ENCODE measurements at regions of chr15 and their contacts with region 1.

Region 1: GRCh38 chr15:31435261-31435911 is 108.8 kb downstream of the KLF13 start:
- DNase-seq: peak; percentile 86
- H3K4me3 Mint-ChIP-seq: peak overlapping the region; percentile 58
- H3K27ac Mint-ChIP-seq: peak overlapping the region; percentile 93
- H3K4me1 Mint-ChIP-seq: peaks cover 77% of the 10 kb centered on the region
- H3K27me3 Mint-ChIP-seq: no peaks in the 10 kb centered on the region

Region 2: DNA sequence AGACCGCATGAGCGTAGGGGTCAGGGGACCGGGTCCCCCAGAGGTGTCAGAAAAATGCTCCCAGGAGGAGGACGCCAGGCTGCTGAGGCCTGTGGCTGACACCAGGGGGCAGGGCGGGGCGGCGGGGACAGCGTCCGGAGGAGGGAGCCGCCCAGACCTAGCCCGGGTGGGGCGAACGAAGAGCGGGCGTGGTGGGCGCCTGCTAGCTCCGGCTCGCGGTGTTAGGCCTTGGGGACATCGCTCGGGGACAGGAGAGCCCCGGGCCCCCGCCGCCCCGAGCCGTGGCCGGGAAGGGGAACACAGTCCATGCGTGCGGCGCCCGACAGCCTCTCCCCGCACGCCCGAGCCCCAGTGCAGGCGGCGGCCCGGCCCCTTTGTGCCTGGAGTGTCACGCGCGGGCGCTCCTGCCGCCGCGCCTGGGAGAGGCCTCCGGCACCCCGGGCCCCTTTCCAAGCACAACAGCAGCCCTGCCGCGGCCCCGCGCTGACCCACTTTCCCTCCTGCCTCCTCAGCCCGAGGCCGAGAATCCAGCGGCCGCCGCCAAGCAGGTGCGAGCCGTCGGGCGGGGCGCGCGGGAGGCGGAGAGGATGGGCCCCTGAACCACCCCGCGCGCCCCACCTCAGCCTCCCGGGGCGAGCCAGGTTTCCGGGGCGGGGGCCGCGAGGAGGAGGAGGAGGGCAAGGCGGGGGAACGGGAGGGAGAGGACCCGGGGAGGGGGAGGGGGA is 219.7 kb before region 1 on chr15:
- intact Hi-C with region 1: loop called (anchors 1 kb)
- DNase-seq: peak; percentile 76
- H3K4me3 Mint-ChIP-seq: peak overlapping the region; percentile 79
- H3K27ac Mint-ChIP-seq: peak overlapping the region; percentile 73
- H3K4me1 Mint-ChIP-seq: peaks cover 48% of the 10 kb centered on the region
- H3K27me3 Mint-ChIP-seq: no peaks in the 10 kb centered on the region

Region 3: GRCh38 chr15:31292391-31293015 is 142.9 kb before region 1 on chr15:
- intact Hi-C with region 1: no loop called
- DNase-seq: no peak
- H3K4me3 Mint-ChIP-seq: no peak overlapping the region
- H3K27ac Mint-ChIP-seq: no peak overlapping the region
- H3K4me1 Mint-ChIP-seq: peaks cover 13% of the 10 kb centered on the region
- H3K27me3 Mint-ChIP-seq: peaks cover 59% of the 10 kb centered on the region

Region 4: DNA sequence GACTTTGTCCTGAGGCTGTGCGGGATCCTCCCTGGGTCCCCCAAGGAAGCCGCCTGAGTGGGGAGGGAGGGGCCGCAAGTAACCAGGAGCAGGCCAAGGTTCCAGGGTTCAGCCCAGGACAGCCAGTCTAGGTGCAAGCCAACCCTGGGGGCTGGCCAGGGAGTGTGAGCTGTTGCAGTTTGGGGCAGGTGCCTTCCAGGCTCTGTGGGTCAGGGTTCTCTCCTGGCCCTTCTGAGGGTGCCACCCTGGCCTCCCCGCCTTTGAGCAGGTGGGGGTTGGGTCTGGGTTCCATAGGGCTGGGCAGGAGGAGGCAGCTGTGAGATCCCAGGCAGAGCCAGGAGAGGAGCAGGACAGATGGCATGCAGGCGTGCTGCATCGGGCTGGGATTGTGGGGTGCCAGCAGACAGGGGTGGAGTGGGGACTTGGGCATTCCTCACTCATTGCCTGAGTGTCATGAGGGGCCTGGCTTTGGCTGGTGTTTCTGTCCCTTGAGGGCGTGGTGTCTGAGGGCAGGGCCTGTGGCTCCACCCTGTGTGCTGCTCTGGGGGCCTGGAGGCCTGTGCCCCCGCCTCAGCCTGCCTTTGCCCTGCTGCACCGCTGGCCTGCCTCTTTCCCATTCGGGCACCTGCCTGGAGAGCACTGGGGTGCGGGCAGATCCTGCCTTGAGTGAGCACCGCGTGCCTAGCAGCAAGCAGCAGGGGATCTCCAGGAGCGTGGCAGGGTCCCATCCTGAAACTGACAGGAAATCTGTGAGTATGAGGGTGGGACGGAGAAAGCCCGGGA is 90.4 kb before region 1 on chr15:
- intact Hi-C with region 1: loop called (anchors 1 kb)
- DNase-seq: no peak
- H3K4me3 Mint-ChIP-seq: peak overlapping the region; percentile 89
- H3K27ac Mint-ChIP-seq: peak overlapping the region; percentile 99
- H3K4me1 Mint-ChIP-seq: peaks cover 94% of the 10 kb centered on the region
- H3K27me3 Mint-ChIP-seq: no peaks in the 10 kb centered on the region

Region 5: DNA sequence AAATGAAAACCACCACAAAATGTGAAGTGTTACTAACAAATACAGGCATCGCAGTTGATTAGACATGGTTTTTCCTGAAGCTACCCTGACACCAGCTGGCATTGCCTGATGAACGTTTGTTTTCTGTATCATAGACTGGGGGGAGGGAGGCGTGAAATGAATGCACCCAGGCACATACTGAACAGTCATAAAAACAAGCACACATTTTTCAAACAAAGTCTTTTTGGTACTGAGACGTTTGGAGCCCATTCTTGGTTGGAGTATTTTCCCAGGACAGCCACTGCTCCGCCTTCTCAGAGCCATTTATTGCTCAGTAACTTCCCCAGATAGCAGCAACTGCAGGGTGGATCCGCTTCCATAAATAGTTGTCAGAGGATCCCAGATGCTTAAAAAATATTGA is 56.3 kb before region 1 on chr15:
- intact Hi-C with region 1: no loop called
- DNase-seq: no peak
- H3K4me3 Mint-ChIP-seq: no peak overlapping the region
- H3K27ac Mint-ChIP-seq: peak overlapping the region; percentile 49
- H3K4me1 Mint-ChIP-seq: peaks cover 38% of the 10 kb centered on the region
- H3K27me3 Mint-ChIP-seq: no peaks in the 10 kb centered on the region

Region 6: DNA sequence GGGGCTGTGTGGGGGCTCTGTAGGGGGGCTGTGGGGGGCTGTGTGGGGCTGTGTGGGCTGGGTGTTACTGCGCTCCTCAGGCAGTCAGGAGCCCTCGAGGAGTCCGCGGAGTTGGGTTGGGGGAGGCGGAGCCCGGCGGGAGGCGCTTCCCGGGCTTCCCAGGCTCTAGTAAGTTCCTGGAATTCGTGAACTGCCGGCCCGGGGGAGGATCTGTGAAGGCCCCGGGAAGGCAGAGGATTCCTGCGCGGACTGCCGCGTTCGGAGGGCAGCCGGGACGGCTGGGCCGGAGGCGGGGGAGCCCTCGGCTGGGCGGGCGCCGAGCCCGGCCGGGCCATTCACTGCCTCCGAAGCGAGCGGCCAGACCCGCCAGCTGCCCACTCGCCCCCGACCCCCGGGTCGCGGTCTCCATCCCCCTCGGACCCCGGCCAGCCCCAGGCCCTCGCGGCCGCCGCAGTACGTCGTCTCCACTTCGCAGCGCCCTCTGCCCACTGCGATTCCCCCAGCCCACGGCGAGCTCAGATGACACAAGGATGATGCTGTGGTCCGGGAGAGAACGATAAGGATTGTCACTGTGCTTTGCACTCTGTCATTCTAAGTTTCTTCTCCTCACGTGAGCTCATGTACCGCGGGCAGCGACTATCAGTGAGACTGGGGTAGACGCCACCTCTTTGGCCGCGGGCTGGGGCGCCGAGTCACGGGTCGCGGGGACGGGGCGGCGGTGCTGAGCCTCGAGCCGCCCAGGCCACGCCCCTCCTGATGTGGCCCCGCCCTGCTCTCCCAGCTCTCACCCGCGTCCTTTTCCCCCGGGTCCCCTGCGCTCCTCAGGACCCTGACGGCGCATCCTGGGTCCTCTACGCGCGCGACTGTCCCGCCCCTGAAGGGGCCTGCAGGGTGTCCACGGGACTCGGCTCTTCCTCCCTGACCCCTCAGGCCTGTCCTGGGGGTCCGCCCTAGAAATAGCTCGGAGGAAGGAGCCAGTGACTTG is 43.4 kb before region 1 on chr15:
- intact Hi-C with region 1: loop called (anchors 1 kb)
- DNase-seq: peak; percentile 78
- H3K4me3 Mint-ChIP-seq: peak overlapping the region; percentile 86
- H3K27ac Mint-ChIP-seq: peak overlapping the region; percentile 90
- H3K4me1 Mint-ChIP-seq: peaks cover 37% of the 10 kb centered on the region
- H3K27me3 Mint-ChIP-seq: no peaks in the 10 kb centered on the region

Region 7: DNA sequence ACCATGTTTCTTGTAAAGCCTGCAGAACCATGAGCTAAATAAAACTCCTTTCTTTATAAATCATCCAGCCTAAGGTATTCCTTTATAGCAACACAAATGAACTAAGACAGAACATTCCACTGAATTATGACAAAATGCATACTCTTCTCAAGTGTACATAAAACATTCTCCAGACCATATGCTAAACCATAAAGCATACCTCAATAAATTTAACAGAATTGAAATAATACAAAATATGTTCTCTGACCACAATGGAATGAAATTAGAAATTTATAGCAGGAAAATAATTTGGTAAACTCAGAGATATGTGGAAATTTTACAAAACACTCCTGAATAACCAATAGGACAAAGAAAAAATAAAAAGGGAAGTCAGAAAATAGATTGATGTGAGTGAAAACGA is 20.2 kb before region 1 on chr15:
- intact Hi-C with region 1: no loop called
- DNase-seq: no peak
- H3K4me3 Mint-ChIP-seq: no peak overlapping the region
- H3K27ac Mint-ChIP-seq: no peak overlapping the region
- H3K4me1 Mint-ChIP-seq: peaks cover 7% of the 10 kb centered on the region
- H3K27me3 Mint-ChIP-seq: peaks cover 6% of the 10 kb centered on the region

Region 8: GRCh38 chr15:31472636-31473384 is 37.4 kb after region 1 on chr15:
- intact Hi-C with region 1: loop called (anchors 1 kb)
- DNase-seq: peak; percentile 68
- H3K4me3 Mint-ChIP-seq: peak overlapping the region; percentile 76
- H3K27ac Mint-ChIP-seq: peak overlapping the region; percentile 90
- H3K4me1 Mint-ChIP-seq: peaks cover 59% of the 10 kb centered on the region
- H3K27me3 Mint-ChIP-seq: no peaks in the 10 kb centered on the region

Region 9: DNA sequence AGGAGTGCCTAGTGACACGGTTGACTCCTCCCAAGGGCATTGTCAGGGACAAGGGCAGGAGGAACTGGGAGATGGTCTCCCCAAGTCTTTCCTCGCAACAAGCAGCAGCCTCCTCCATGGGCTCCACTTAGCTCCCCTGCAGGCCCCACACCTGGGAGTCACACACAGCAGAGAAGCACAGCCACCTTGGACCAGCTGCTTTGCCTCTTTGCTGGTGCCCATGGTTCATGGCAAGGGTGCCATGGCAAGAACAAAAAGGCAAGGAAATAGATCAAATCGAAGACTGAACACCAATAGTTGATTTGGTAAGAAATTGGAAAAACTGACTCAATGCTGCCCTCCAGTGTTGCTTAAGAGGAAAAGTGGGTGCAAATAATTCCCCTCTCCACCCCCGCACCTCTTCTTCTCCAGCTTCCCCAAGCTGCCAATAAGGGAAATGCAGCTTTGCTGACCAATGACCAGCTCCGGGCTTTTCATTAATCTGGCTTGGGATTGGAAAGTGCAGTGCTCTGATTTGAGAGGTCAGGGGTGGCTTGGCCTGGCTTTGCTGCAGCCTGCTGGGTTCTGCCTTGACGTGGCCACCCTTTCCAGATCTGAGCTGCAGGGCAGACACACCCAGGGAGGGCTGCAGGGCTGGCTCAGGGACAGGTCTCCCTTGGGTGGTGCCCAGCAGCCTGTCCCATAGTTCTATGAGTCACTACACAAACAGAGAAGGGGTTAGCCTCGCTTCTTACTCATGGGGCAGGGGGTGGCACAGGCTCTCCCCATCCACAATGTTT is 53.2 kb after region 1 on chr15:
- intact Hi-C with region 1: loop called (anchors 1 kb)
- DNase-seq: peak; percentile 29
- H3K4me3 Mint-ChIP-seq: peak overlapping the region; percentile 40
- H3K27ac Mint-ChIP-seq: peak overlapping the region; percentile 76
- H3K4me1 Mint-ChIP-seq: peaks cover 75% of the 10 kb centered on the region
- H3K27me3 Mint-ChIP-seq: no peaks in the 10 kb centered on the region

Region 10: GRCh38 chr15:31574766-31575165 is 139.4 kb after region 1 on chr15:
- intact Hi-C with region 1: no loop called
- DNase-seq: no peak
- H3K4me3 Mint-ChIP-seq: no peak overlapping the region
- H3K27ac Mint-ChIP-seq: no peak overlapping the region
- H3K4me1 Mint-ChIP-seq: no peaks in the 10 kb centered on the region
- H3K27me3 Mint-ChIP-seq: peaks cover 12% of the 10 kb centered on the region

Measured in activated T-helper 1 cell treated with anti-CD3 and anti-CD28 coated beads, Interleukin-12 subunit alpha, Interleukin-12 subunit beta, Interleukin-2, Interleukin-4 antibody, amounts not matched to agents 30 ng/mL and 10 ng/mL and 1 ng/mL, durations not matched to agents 14 hours and 24 hours and 36 hours (primary cell).